ENCODE measurements at regions of chr19 and their contacts with region 1.

Region 1: DNA sequence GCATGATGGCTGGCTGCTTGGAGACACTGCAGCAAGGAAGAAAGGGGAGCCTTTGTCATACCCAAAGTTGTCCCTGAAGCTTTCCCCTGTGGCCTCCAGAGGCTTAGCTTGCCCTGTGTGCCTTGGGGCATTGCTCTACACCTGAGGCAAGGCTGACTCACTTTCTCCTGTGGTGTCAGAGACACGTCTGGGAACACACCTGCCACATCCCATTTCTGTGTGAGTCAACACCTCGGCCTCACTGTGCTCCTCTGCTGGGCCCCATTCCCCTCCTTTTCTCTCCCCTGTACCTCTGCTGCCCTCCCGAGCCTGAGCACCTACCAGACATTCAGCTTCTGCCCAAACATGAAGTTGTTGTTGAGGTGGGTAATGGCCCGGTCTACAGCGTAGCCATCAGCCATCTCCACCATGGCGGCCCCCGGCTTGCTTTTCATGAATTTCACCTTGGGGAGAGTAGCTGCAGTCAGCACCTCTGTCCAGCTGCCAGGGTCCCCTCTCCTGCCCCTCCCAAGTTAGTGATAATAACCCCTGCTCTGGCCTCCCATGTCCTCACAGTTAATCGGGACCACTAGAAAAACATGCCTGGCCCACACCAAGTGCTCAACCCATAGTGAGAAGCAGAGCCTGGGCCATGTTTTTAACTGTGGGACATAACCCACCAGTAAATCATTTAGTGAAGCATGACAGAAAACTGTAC is 7.1 kb upstream of the ECH1 start:
- DNase-seq: peak; percentile 98
- H3K4me3 ChIP-seq: no peak overlapping the region
- H3K27ac ChIP-seq: peak overlapping the region; percentile 75
- H3K4me1 ChIP-seq: peaks cover 55% of the 10 kb centered on the region
- H3K27me3 ChIP-seq: no peaks in the 10 kb centered on the region
- CTCF ChIP-seq: peak; percentile 53 to 72

Region 2: GRCh38 chr19:38559428-38560401 is 279.0 kb before region 1 on chr19:
- CTCF ChIA-PET with region 1: no interaction called
- dilution Hi-C with region 1: no loop called
- in situ Hi-C with region 1: no loop called
- intact Hi-C with region 1: loop called (anchors 5 kb)
- DNase-seq: peak; percentile 99
- H3K4me3 ChIP-seq: no peak overlapping the region
- H3K27ac ChIP-seq: peak overlapping the region; percentile 48
- H3K4me1 ChIP-seq: peaks cover 19% of the 10 kb centered on the region
- H3K27me3 ChIP-seq: peaks cover under 1% of the 10 kb centered on the region
- CTCF ChIP-seq: no peak

Region 3: GRCh38 chr19:38729653-38730469 is 108.9 kb before region 1 on chr19:
- CTCF ChIA-PET with region 1: no interaction called
- dilution Hi-C with region 1: no loop called
- in situ Hi-C with region 1: loop called (anchors 10 to 25 kb)
- intact Hi-C with region 1: loop called (anchors 1 kb)
- DNase-seq: peak; percentile 43
- H3K4me3 ChIP-seq: no peak overlapping the region
- H3K27ac ChIP-seq: no peak overlapping the region
- H3K4me1 ChIP-seq: peaks cover 24% of the 10 kb centered on the region
- H3K27me3 ChIP-seq: no peaks in the 10 kb centered on the region
- CTCF ChIP-seq: peak; percentile 59 to 85

Region 4: GRCh38 chr19:38769635-38770211 is 69.0 kb before region 1 on chr19:
- CTCF ChIA-PET with region 1: no interaction called
- dilution Hi-C with region 1: loop called (anchors 5 kb)
- in situ Hi-C with region 1: no loop called
- intact Hi-C with region 1: no loop called
- DNase-seq: no peak
- H3K4me3 ChIP-seq: peak overlapping the region in 1 of 3 experiments; percentile 23
- H3K27ac ChIP-seq: no peak overlapping the region
- H3K4me1 ChIP-seq: peaks cover 17% of the 10 kb centered on the region
- H3K27me3 ChIP-seq: no peaks in the 10 kb centered on the region
- CTCF ChIP-seq: peak; percentile 70 to 84

Region 5: DNA sequence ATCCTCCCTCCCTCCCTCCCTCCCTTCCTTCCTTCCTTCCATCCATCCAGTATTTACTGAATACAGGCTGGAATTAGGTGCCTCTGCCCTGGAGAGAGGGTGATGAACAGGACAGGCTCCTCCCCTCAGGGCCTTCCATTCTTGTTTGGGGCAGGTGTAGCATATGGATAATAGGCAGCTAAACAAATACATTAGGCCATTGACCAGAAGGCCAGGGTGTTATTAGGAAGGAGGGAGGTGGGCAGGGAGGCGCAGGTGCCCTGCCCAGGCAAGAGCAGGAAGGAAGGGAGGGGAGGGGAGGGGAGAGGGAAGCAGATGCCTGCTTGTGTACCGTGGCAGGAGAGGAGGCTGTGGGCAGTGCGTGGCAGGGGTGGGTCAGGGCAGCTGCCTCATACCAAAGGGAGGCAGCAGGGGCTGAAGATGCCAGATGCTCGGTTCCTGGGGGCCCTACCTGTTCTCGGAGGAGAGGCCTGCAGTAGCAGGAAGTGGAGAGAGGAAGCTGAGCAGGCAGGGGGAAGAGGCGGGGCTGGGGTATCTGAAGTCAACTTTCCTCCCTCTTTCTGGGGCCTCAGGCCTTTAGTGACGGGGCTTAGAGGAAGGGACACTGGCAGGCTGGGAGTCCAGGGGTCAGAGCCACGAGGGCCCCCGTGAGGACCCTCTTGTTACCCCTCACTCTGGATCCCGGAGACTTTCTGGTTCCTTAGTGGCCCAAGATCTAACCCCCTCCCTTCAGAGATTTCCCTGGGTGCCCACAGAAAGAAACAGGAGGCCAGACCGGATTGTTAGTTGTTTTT is 39.3 kb after region 1 on chr19 and contains the start of gene RINL:
- CTCF ChIA-PET with region 1: no interaction called
- dilution Hi-C with region 1: no loop called
- in situ Hi-C with region 1: no loop called
- intact Hi-C with region 1: no loop called
- DNase-seq: no peak
- H3K4me3 ChIP-seq: no peak within 1 kb of the TSS
- H3K27ac ChIP-seq: no peak within 1 kb of the TSS
- H3K4me1 ChIP-seq: peaks cover 9% of the 10 kb centered on the region
- H3K27me3 ChIP-seq: no peaks in the 10 kb centered on the region
- CTCF ChIP-seq: no peak
- total RNA-seq, gene RINL: 5.7 to 9.2 TPM

Region 6: GRCh38 chr19:38929929-38930775 is 91.4 kb after region 1 on chr19 and contains the start of gene SARS2:
- CTCF ChIA-PET with region 1: no interaction called
- dilution Hi-C with region 1: loop called (anchors 5 kb)
- in situ Hi-C with region 1: no loop called
- intact Hi-C with region 1: loop called (anchors 2 kb)
- DNase-seq: peak; percentile 84
- H3K4me3 ChIP-seq: peak within 1 kb of the TSS; percentile 84 to 90 (median 86)
- H3K27ac ChIP-seq: peak within 1 kb of the TSS; percentile 82
- H3K4me1 ChIP-seq: peaks cover 12% of the 10 kb centered on the region
- H3K27me3 ChIP-seq: no peaks in the 10 kb centered on the region
- CTCF ChIP-seq: peak; percentile 88 to 96
- total RNA-seq, gene SARS2: 18.0 to 28.0 TPM

Measured in mammary epithelial cell (primary cell).